Ascending aorta (tissue), 2 donors: ENCODE measurements at regions of chr11 and their contacts with region 1.

Region 1: DNA sequence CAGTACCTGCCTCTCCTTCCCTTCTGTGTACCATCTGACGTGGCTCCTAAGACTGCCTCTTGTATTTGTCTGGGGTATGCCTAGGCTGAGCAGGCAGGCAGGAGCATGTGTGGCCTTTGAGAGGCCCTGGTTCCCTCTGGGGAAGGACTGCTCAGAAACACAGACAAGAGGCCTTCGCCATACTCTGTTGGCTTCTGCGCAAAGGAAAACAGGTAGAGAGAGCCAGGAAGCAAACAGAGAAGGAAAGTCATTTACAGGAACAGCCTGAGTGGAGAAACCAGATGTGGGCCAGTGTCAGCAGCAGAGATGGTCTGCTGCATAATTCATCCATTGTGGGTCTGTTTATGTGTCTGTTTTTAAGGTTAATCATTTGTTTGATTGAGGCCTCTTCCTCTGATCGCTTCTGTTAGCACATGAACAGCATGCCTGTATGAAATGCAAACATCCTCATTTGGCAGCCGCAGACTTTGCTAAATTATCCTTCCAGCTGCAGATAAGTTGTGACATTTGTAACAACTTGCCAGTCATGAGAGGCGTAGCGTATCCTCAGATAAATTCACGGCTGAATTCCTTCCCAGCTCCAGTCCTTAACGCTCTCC is 119.4 kb downstream of the GALNT18 start:
- DNase-seq: no peak
- H3K4me3 ChIP-seq: no peak overlapping the region
- H3K27ac ChIP-seq: peak overlapping the region; percentile 79 to 81
- H3K4me1 ChIP-seq: peaks cover 14 to 25% of the 10 kb centered on the region in 2 donors
- H3K27me3 ChIP-seq: no peaks in the 10 kb centered on the region
- CTCF ChIP-seq: no peak

Region 2: DNA sequence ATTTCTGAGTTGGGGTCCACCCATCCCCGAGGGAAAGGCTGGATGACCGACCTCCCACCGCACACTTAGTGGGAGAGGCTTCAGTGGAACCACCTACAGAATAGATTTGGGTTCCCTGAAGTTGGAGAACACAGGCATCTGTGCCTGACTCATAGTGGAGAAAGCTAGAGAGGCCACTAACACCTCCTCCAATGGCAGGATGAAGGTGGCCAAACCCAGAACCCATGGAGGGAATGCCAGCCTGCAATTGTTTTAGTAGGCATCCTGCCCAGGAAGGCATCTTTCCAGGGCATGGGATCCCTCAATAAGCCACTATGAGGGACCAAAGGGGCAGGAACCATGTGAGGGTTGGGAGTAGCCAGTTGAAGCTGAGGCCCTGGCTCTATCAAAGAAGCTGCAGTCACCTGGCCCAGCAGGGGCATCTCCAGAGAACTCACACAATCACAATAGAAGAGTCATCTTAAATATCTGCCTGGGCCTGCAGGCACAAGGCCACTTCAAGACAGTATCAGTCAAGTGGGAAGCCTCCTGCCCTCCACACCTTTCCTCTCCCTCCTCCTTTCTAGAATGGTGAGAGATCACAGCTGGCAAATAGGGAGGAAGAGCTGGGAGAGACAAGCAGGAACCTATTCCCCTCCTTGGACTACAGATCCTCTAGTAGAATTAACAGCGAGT is 25.3 kb before region 1 on chr11:
- intact Hi-C with region 1: loop called (anchors 2 kb)
- DNase-seq: no peak
- H3K4me3 ChIP-seq: no peak overlapping the region
- H3K27ac ChIP-seq: peak overlapping the region in 1 of 2 donors; percentile 18
- H3K4me1 ChIP-seq: no peaks in the 10 kb centered on the region
- H3K27me3 ChIP-seq: no peaks in the 10 kb centered on the region
- CTCF ChIP-seq: no peak

Region 3: DNA sequence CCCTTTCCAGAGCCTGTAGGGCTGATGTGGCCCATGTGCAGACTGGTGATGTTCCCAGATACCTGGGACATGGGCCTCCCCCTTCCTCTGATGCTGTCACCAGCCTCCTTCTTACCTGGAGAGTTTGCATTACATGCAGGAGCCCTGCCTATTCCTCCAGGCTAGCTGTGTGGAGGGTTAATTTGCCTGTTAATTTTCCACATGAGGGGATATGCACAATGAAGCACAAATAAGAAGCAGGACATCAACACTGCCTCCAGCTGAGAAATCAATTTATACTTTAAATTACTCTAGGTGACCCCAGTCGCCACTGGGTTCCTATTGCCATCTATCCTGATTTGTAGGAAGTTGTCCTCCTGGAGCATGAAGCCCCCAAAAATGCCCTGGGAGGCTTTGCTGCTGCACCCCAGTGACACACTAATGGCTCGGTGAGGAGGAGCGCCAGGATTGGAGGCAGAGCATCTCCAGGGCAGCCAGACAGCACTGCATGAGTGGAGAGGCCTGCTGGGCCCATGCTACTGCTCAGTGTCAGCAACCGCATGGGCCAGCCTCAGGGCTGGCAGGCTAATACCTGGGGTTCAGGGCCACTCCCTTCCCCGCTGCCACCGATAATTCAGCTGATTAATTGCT is 237.8 kb after region 1 on chr11:
- intact Hi-C with region 1: no loop called
- DNase-seq: no peak
- H3K4me3 ChIP-seq: no peak overlapping the region
- H3K27ac ChIP-seq: no peak overlapping the region
- H3K4me1 ChIP-seq: no peaks in the 10 kb centered on the region
- H3K27me3 ChIP-seq: no peaks in the 10 kb centered on the region
- CTCF ChIP-seq: no peak

Region 4: DNA sequence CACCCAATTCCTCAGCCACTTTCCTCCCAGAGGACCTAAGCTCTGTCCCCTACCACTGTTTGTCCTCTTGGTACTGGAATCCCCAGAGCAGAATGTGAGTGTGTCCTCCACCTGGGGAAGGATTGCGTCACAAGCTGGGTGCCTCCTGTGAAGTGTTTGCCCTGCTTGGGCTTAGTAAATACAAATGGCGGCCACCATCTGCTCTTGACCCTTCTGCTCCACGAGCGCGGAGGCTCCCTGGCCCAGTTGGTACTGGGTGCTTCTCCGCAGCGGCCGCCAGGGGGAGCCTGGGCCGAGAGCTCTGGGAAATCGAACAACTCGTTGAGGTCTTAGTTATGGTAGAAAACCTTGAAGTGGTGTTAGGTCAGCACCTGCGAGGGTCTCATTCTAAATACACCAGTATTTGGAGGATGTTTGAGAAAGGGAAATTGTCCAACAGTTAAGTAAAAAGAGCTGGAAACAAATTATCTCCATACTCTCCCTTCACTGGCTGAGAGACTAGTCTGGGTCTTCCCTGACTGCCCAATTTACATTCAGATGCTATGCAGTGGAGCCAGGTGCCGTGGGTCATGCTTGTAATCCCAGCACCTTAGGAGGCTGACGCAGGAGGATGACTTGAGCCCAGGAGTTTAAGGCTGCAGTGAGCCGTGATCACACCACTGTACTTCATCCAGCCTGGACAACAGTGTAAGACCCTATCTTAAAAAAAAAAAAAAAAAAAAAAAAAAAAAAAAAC is 1097.2 kb after region 1 on chr11:
- intact Hi-C with region 1: no loop called
- DNase-seq: peak in 1 of 2 donors; percentile 65
- H3K4me3 ChIP-seq: no peak overlapping the region
- H3K27ac ChIP-seq: no peak overlapping the region
- H3K4me1 ChIP-seq: no peaks in the 10 kb centered on the region
- H3K27me3 ChIP-seq: no peaks in the 10 kb centered on the region
- CTCF ChIP-seq: peak; percentile 55 to 63 (median 56)